HepG2 (cell line): ENCODE measurements at regions of chr13 and their contacts with region 1.

Region 1: GRCh38 chr13:84528408-84529070 is 646.3 kb upstream of the SLITRK1 start:
- DNase-seq: no peak
- ATAC-seq: no peak
- H3K4me3 ChIP-seq: no peak overlapping the region
- H3K27ac ChIP-seq: no peak overlapping the region
- H3K4me1 ChIP-seq: no peaks in the 10 kb centered on the region
- H3K27me3 ChIP-seq: no peaks in the 10 kb centered on the region
- CTCF ChIP-seq: no peak
- EP300 ChIP-seq: no peak
- POLR2A ChIP-seq: no peak
- RAD21 ChIP-seq: no peak

Region 2: GRCh38 chr13:83515268-83516015 is 1013.1 kb before region 1 on chr13:
- CTCF ChIA-PET with region 1: no interaction called
- POLR2A ChIA-PET with region 1: no interaction called
- in situ Hi-C with region 1: no loop called
- intact Hi-C with region 1: loop called (anchors 5 kb)
- DNase-seq: no peak
- ATAC-seq: no peak
- H3K4me3 ChIP-seq: no peak overlapping the region
- H3K27ac ChIP-seq: no peak overlapping the region
- H3K4me1 ChIP-seq: no peaks in the 10 kb centered on the region
- H3K27me3 ChIP-seq: no peaks in the 10 kb centered on the region; a peak in 1 of 5 replicates
- CTCF ChIP-seq: no peak
- EP300 ChIP-seq: no peak
- POLR2A ChIP-seq: no peak
- RAD21 ChIP-seq: no peak

Region 3: GRCh38 chr13:84563611-84564010 is 35.1 kb after region 1 on chr13:
- CTCF ChIA-PET with region 1: no interaction called
- POLR2A ChIA-PET with region 1: no interaction called
- in situ Hi-C with region 1: no loop called
- intact Hi-C with region 1: no loop called
- DNase-seq: no peak
- ATAC-seq: no peak
- H3K4me3 ChIP-seq: no peak overlapping the region
- H3K27ac ChIP-seq: no peak overlapping the region
- H3K4me1 ChIP-seq: no peaks in the 10 kb centered on the region
- H3K27me3 ChIP-seq: no peaks in the 10 kb centered on the region; a peak in 1 of 5 replicates
- CTCF ChIP-seq: no peak
- EP300 ChIP-seq: no peak
- POLR2A ChIP-seq: no peak
- RAD21 ChIP-seq: no peak

Region 4: DNA sequence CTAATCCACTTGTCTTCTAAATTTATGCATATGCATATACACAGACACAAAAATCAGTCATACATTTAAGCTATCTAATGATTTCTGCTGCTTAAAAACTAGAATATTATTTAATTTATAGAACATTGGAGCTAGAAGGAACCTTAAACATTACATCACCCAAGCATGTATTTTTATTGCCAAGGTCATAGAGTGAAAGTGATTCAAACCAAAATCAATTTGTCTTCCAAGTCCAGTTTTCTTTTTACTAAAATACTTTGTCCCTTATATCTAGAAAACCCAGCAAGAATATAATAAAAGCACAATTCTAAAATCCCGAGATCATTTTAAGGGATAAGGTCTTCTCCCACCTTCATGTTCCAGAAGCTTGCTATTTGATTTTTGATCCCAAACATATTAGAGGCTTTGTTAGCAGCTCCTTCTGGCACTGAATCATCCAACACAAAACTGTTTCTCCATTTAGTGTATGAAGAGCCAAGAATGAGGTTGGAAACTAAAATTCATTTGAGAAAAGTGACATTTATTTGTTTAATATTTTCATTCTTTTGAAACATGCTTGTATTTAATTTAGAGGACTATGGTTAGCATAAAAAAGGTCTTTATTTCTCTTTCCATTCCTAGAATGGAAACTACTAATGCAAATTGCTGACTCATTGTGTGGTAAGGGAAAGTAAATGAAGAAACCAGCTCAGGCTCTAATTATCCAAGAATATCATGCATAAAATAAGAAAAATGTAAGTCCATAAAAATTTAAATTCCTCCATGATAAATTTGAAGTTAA is 130.5 kb after region 1 on chr13:
- CTCF ChIA-PET with region 1: no interaction called
- POLR2A ChIA-PET with region 1: no interaction called
- in situ Hi-C with region 1: no loop called
- intact Hi-C with region 1: no loop called
- DNase-seq: no peak
- ATAC-seq: no peak
- H3K4me3 ChIP-seq: no peak overlapping the region
- H3K27ac ChIP-seq: no peak overlapping the region
- H3K4me1 ChIP-seq: no peaks in the 10 kb centered on the region
- H3K27me3 ChIP-seq: no peaks in the 10 kb centered on the region
- CTCF ChIP-seq: no peak
- EP300 ChIP-seq: no peak
- POLR2A ChIP-seq: no peak
- RAD21 ChIP-seq: no peak

Region 5: DNA sequence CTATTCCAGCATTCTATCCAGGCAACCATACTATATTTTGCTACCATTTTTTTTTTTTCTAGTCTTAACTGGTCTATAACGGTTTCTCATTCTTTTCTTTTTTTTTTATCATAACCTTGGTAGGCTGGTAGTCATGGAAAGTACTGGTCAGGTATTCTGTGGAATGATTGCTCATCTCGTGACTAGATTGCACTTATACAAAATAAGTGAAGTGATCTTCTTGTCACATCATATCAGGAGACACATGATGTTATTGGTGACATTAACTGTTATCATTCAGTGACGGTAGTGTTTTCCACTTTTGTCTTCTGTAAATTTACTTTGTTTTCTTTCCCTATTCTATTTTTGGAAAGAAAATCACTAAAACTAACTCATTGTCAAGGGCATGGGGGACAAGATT is 1510.0 kb after region 1 on chr13:
- CTCF ChIA-PET with region 1: no interaction called
- POLR2A ChIA-PET with region 1: no interaction called
- in situ Hi-C with region 1: no loop called
- intact Hi-C with region 1: no loop called
- DNase-seq: no peak
- ATAC-seq: no peak
- H3K4me3 ChIP-seq: no peak overlapping the region
- H3K27ac ChIP-seq: no peak overlapping the region
- H3K4me1 ChIP-seq: no peaks in the 10 kb centered on the region
- H3K27me3 ChIP-seq: no peaks in the 10 kb centered on the region
- CTCF ChIP-seq: no peak
- EP300 ChIP-seq: no peak
- POLR2A ChIP-seq: no peak
- RAD21 ChIP-seq: no peak